ENCODE measurements at regions of chr15 and their contacts with region 1.

Region 1: GRCh38 chr15:84658080-84658787 is at the start of gene NMB:
- DNase-seq: peak; percentile 81 to 90
- ATAC-seq: peak; percentile 61 to 80 (median 74)
- H3K4me3 ChIP-seq: peak within 1 kb of the TSS; percentile 73
- H3K27ac ChIP-seq: peak within 1 kb of the TSS; percentile 80
- H3K4me1 ChIP-seq: peaks cover 18% of the 10 kb centered on the region
- H3K27me3 ChIP-seq: no peaks in the 10 kb centered on the region
- CTCF ChIP-seq: peak; percentile 44
- total RNA-seq, gene NMB: 1.0 to 2.1 (median 1.2) TPM

Region 2: GRCh38 chr15:84818261-84819131 is 160.3 kb after region 1 on chr15:
- intact Hi-C with region 1: loop called in 1 of 2 experiments (anchors 5 kb)
- DNase-seq: peak; percentile 46 to 73
- ATAC-seq: peak; percentile 38 to 75 (median 53)
- H3K4me3 ChIP-seq: peak overlapping the region; percentile 90
- H3K27ac ChIP-seq: peak overlapping the region; percentile 99
- H3K4me1 ChIP-seq: peaks cover 55% of the 10 kb centered on the region
- H3K27me3 ChIP-seq: no peaks in the 10 kb centered on the region
- CTCF ChIP-seq: no peak

Region 3: DNA sequence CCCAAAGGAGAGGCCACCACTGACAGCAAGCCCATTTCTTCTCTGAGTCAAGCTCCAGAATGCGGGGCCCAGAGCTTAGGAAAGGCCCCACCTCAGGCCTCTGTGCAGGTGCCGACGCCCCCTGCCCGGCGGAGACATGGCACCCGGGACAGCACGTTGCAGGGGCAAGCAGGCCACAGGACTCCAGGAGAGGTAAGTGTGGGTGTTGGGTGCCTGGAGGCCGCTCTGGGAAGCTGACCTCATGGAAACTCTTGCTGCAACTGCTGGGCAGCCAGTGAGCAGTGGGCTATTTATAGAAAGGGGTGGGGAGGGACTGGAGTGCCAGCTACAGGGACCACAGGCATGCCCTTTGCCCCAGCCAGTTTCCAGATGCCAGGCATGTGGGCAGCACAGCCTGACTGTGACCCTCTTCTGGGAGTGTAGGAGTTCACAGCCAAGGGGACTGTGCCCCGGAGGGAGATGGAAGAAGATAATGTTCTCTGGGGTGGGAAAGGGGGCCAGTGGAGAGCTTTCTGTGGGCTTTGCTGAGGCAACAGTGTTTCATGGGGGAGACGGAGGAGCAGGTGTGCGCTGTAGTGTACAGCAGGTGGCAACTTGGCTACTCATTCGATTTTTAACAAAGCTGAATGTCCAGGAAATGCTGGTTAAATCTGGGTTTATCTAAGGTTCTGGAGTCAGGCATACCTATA is 182.7 kb after region 1 on chr15:
- intact Hi-C with region 1: no loop called
- DNase-seq: peak; percentile 80 to 93
- ATAC-seq: peak; percentile 80 to 86 (median 83)
- H3K4me3 ChIP-seq: peak overlapping the region; percentile 38
- H3K27ac ChIP-seq: peak overlapping the region; percentile 99
- H3K4me1 ChIP-seq: peaks cover 79% of the 10 kb centered on the region
- H3K27me3 ChIP-seq: no peaks in the 10 kb centered on the region
- CTCF ChIP-seq: no peak